ENCODE measurements at regions of chr2 and their contacts with region 1.

Region 1: DNA sequence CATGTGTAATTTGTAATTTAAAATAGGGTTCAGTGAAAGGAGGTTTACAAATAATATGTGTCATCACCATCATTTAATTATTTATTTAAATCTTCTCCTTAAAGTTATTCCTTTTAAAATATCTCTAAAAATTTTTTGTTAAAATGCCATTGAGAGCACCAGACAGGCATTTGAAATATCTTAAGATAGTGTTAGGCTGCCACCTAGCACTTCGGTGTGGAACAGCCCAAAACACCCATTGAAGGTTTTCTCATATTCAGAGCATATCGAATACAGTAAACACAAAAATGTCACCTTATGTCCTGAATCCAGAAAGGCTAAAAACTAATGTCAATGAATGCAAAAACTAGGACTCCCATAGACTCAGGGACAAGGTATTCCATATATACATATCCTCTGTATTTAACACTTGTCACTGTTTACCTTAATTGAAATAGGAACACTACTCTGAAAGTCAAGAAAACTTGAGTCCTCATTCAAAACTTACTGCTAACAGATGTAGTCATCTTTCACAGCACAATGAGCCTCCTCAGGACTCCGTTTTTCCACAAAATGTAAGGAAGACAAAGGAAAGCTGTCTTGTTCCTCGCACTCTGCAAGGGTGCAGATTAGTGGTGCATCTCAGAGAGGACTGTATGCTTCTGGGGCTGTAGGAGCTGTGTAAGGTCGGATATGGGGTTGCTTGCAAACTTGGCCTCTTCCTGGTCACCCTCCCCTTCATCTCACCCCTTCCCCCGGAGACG is 329.5 kb downstream of the PAX3 start:
- DNase-seq: peak; percentile 11
- ATAC-seq: no peak
- H3K4me3 Mint-ChIP-seq: no peak overlapping the region
- H3K27ac Mint-ChIP-seq: no peak overlapping the region
- H3K4me1 Mint-ChIP-seq: no peaks in the 10 kb centered on the region
- H3K27me3 Mint-ChIP-seq: peaks cover 4% of the 10 kb centered on the region

Region 2: DNA sequence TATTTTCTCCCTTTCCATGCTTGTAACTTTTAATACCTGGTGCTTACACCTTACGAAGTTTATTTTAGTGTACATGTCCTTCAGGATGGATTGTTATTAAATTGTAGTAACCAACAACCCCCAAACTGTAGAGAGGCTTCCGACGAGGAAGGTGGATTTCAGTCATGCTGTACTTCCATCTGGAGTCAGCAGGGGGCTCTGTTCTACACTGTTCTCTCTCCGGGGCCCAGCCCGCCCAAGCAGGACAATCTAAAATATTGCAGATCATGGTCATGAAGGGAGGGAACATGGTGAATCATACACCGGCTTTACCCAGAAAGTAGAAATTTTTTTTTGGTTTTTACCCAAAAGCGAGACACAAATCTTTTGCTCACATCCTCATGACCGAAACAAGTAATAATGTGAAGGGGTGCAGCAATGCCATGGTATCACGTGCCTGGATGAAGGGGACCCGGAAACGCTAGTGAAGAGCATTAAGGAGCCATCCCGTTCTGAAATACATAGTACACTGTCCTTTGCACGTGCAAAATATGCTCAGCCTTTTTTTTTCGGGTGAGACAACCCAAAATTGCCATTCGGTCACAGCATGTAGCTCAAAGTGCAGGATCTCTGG is 1281.9 kb before region 1 on chr2:
- CTCF ChIA-PET with region 1: no interaction called
- POLR2A ChIA-PET with region 1: no interaction called
- intact Hi-C with region 1: loop called in 1 of 2 experiments (anchors 2 kb)
- DNase-seq: peak; percentile 79
- ATAC-seq: peak; percentile 72
- H3K4me3 Mint-ChIP-seq: no peak overlapping the region
- H3K27ac Mint-ChIP-seq: no peak overlapping the region
- H3K4me1 Mint-ChIP-seq: no peaks in the 10 kb centered on the region
- H3K27me3 Mint-ChIP-seq: peaks cover 21% of the 10 kb centered on the region

Region 3: GRCh38 chr2:221581986-221582385 is 387.3 kb before region 1 on chr2:
- CTCF ChIA-PET with region 1: no interaction called
- POLR2A ChIA-PET with region 1: no interaction called
- intact Hi-C with region 1: loop called in 1 of 2 experiments (anchors 10 kb)
- DNase-seq: no peak
- ATAC-seq: no peak
- H3K4me3 Mint-ChIP-seq: no peak overlapping the region
- H3K27ac Mint-ChIP-seq: no peak overlapping the region
- H3K4me1 Mint-ChIP-seq: no peaks in the 10 kb centered on the region
- H3K27me3 Mint-ChIP-seq: peaks cover 31% of the 10 kb centered on the region